Caco-2 (cell line): ENCODE measurements at regions of chr19 and their contacts with region 1.

Region 1: DNA sequence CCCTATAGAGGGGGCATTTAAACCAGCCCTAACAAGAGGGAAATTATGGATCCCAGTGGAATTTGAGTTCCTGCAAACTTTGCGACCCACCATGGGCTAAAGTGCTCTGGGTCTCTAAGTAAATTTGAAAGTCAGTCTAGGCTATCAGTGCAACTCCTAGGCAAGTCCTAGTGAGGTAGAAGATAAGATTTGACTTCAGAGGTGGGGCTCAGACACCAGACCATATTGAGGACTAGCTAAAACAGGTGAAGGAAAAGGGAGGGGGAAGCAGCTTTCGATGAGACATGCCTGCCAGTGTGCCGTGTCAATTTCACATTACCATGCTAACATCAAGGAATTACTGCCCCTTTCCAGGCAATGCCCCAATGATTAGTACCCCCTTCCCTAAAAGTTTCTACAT is 38.4 kb downstream of the CD320 start:
- DNase-seq: no peak
- H3K4me3 ChIP-seq: no peak overlapping the region
- H3K4me3 Mint-ChIP-seq: peak overlapping the region; percentile 64
- H3K27ac Mint-ChIP-seq: no peak overlapping the region
- H3K4me1 ChIP-seq: peaks cover 4% of the 10 kb centered on the region; the same call in 1 of the 2 replicates
- H3K4me1 Mint-ChIP-seq: no peaks in the 10 kb centered on the region
- H3K27me3 ChIP-seq: no peaks in the 10 kb centered on the region
- H3K27me3 Mint-ChIP-seq: no peaks in the 10 kb centered on the region
- CTCF ChIP-seq: no peak

Region 2: DNA sequence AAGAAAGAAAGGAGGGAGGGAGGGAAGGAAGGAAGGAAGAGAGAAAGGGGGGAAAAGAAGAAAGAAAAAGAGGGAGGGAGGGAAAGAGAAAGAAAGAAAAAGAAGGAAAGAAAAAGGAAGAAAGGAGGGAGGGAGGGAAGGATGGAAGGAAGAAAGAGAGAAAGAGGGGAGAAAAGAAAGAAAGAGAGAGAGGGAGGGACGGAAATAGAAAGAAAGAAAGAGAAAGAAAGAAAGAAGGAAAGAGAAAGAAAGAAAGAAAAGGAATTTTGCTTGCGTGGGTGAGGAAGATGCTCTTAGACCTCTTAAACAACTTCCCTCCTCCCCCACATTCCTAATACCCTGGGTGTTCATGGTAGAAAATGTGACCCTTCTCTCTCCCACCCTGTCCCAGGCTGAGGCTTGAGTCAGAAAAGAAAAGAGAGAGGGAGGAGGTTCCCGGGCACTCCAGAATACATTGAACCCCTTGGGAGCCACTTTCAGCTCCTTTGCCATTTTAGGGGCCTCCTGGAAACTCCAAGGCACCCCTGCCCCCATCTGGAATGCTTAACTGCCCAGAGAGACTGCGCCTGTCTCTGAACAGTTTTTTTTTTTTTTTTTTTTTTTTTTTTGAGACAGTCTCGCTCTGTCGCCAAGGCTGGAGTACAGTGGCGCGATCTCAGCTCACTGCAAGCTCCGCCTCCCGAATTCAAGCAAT is 82.6 kb after region 1 on chr19:
- CTCF ChIA-PET with region 1: no interaction called
- POLR2A ChIA-PET with region 1: no interaction called
- intact Hi-C with region 1: no loop called
- DNase-seq: no peak
- H3K4me3 ChIP-seq: no peak overlapping the region
- H3K4me3 Mint-ChIP-seq: peak overlapping the region; percentile 12
- H3K27ac Mint-ChIP-seq: no peak overlapping the region
- H3K4me1 ChIP-seq: peaks cover 13% of the 10 kb centered on the region; the same call in 1 of the 2 replicates
- H3K4me1 Mint-ChIP-seq: no peaks in the 10 kb centered on the region
- H3K27me3 ChIP-seq: no peaks in the 10 kb centered on the region
- H3K27me3 Mint-ChIP-seq: no peaks in the 10 kb centered on the region
- CTCF ChIP-seq: no peak

Region 3: GRCh38 chr19:8363803-8364771 is 94.4 kb after region 1 on chr19 and contains the start of gene ANGPTL4:
- CTCF ChIA-PET with region 1: interaction called, 12 read pairs
- POLR2A ChIA-PET with region 1: no interaction called
- intact Hi-C with region 1: no loop called
- DNase-seq: peak; percentile 60 to 64
- H3K4me3 ChIP-seq: peak within 1 kb of the TSS; percentile 51
- H3K4me3 Mint-ChIP-seq: peak within 1 kb of the TSS; percentile 72
- H3K27ac Mint-ChIP-seq: peak within 1 kb of the TSS; percentile 18
- H3K4me1 ChIP-seq: no peaks in the 10 kb centered on the region
- H3K4me1 Mint-ChIP-seq: peaks cover 7% of the 10 kb centered on the region
- H3K27me3 ChIP-seq: no peaks in the 10 kb centered on the region
- H3K27me3 Mint-ChIP-seq: no peaks in the 10 kb centered on the region
- CTCF ChIP-seq: peak; percentile 5 to 43
- total RNA-seq, gene ANGPTL4: 0.63 and 1.2 TPM in 2 replicates

Region 4: GRCh38 chr19:8396563-8397203 is 127.0 kb after region 1 on chr19:
- CTCF ChIA-PET with region 1: no interaction called
- POLR2A ChIA-PET with region 1: no interaction called
- intact Hi-C with region 1: loop called (anchors 5 kb)
- DNase-seq: peak; percentile 51 to 62
- H3K4me3 ChIP-seq: no peak overlapping the region
- H3K4me3 Mint-ChIP-seq: no peak overlapping the region
- H3K27ac Mint-ChIP-seq: peak overlapping the region; percentile 48
- H3K4me1 ChIP-seq: 0 out of 2 replicates have a peak, but pooled peaks cover 5% of the 10 kb centered on the region
- H3K4me1 Mint-ChIP-seq: peaks cover 13% of the 10 kb centered on the region
- H3K27me3 ChIP-seq: no peaks in the 10 kb centered on the region
- H3K27me3 Mint-ChIP-seq: no peaks in the 10 kb centered on the region
- CTCF ChIP-seq: peak; percentile 43 to 51

Region 5: DNA sequence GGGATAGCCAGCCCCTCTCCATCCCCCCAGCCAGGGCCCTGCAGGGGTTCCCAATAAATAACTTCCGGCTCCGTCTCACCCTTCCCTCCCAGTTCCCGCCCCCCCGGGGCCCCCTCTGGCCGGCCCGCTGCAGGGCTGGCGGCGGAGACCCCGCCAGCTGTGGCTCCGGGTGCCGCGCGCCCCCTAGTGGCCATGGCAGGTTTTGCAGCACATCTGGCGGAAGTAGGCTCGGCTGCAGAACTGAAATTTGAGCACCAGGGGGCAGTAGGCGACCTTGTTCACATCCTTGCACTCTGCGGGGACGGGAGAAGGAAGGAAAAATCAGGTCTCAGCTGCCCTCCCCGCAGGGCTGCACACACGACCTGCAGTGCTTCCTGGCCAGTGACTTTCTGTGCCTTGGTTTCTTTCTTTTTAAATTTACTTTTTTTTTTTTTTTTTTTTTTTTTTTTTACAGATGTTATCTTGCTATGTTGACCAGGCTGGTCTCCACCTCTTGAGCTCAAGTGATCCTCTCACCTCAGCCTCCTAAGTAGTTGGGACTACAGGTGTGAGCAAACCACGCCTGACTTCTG is 311.1 kb after region 1 on chr19:
- CTCF ChIA-PET with region 1: no interaction called
- POLR2A ChIA-PET with region 1: no interaction called
- intact Hi-C with region 1: no loop called
- DNase-seq: peak; percentile 76 to 84
- H3K4me3 ChIP-seq: no peak overlapping the region
- H3K4me3 Mint-ChIP-seq: no peak overlapping the region
- H3K27ac Mint-ChIP-seq: no peak overlapping the region
- H3K4me1 ChIP-seq: no peaks in the 10 kb centered on the region
- H3K4me1 Mint-ChIP-seq: peaks cover 6% of the 10 kb centered on the region
- H3K27me3 ChIP-seq: no peaks in the 10 kb centered on the region
- H3K27me3 Mint-ChIP-seq: peaks cover 9% of the 10 kb centered on the region
- CTCF ChIP-seq: peak; percentile 98